ENCODE measurements at regions of chrX and their contacts with region 1.

Region 1: GRCh38 chrX:101051549-101052302 is at the start of gene TRMT2B:
- DNase-seq: peak; percentile 64 to 73
- H3K4me3 ChIP-seq: peak within 1 kb of the TSS; percentile 77
- H3K27ac ChIP-seq: peak within 1 kb of the TSS; percentile 50
- H3K4me1 ChIP-seq: peaks cover 6% of the 10 kb centered on the region
- H3K27me3 ChIP-seq: no peaks in the 10 kb centered on the region
- CTCF ChIP-seq: no peak
- total RNA-seq, gene TRMT2B: 31.6 and 38.1 TPM in 2 replicates

Region 2: DNA sequence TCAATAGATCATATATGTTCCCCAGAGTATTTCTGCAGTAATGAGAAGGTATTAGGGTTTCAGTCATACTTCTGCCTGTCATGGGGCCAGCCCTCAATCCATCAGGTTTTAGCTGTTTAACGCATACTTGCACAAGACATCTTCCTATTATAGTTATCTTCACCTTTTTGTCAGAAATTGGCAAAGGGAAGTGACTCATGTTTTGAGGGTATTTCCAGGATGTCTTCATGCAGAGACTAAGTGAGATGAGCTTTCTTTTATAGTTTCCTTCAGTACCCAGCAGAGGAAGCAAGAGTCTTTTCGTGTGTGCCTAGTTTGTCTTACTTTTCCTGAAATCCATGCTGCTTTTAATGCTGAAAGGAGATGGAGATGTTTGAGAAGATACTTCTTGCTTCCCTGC is 222.0 kb before region 1 on chrX:
- CTCF ChIA-PET with region 1: no interaction called
- POLR2A ChIA-PET with region 1: no interaction called
- intact Hi-C with region 1: no loop called
- DNase-seq: no peak
- H3K4me3 ChIP-seq: no peak overlapping the region
- H3K27ac ChIP-seq: no peak overlapping the region
- H3K4me1 ChIP-seq: no peaks in the 10 kb centered on the region
- H3K27me3 ChIP-seq: no peaks in the 10 kb centered on the region
- CTCF ChIP-seq: no peak

Region 3: GRCh38 chrX:101097546-101098453 is 46.1 kb after region 1 on chrX and contains the start of gene CENPI:
- CTCF ChIA-PET with region 1: no interaction called
- POLR2A ChIA-PET with region 1: no interaction called
- intact Hi-C with region 1: loop called (anchors 2 kb)
- DNase-seq: peak; percentile 87 to 96
- H3K4me3 ChIP-seq: peak within 1 kb of the TSS; percentile 59
- H3K27ac ChIP-seq: no peak within 1 kb of the TSS
- H3K4me1 ChIP-seq: peaks cover 4% of the 10 kb centered on the region
- H3K27me3 ChIP-seq: no peaks in the 10 kb centered on the region
- CTCF ChIP-seq: no peak
- total RNA-seq, gene CENPI: 18.0 and 26.1 TPM in 2 replicates